Right lobe of liver (tissue), 6 donors: ENCODE measurements at regions of chr5 and their contacts with region 1.

Region 1: GRCh38 chr5:127564002-127564769 is 46.7 kb downstream of the PRRC1 start:
- DNase-seq: no peak
- ATAC-seq: peak; percentile 85 to 91 (median 87)
- H3K4me3 ChIP-seq: no peak overlapping the region
- H3K27ac ChIP-seq: no peak overlapping the region
- H3K4me1 ChIP-seq: no peaks in the 10 kb centered on the region
- H3K27me3 ChIP-seq: no peaks in the 10 kb centered on the region
- CTCF ChIP-seq: peak; percentile 65 to 73 (median 68)
- POLR2A ChIP-seq: no peak

Region 2: DNA sequence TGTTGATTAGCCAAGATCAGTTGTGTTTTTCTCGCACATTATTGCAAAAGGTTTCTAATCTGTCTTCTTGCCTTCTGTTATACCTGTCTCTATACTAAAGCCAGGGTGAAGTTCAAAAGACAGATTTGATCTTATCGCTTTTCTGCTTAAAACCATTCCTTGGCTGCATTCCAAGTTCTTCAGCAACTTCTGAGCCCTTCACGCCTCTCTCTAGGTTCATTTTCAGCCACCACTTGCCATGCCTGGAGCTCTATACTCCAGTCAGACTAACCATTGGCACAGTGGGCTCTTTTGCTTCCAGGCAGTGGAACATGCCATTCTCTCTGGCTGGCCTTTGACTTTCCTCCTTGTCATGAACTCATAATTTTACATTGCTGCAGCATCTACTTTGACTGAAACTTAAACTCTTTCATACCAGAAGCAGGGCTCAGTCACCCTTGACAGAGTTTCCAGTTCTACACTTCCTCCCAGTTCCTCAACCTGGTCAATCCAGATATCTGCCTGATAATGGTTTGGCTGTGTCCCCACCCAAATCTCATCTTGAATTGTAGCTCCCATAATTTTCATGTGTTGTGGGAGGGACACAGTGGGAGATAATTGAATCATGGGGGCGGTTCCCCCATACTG is 633.8 kb after region 1 on chr5:
- intact Hi-C with region 1: loop called in 1 of 2 experiments (anchors 10 kb)
- DNase-seq: no peak
- ATAC-seq: no peak
- H3K4me3 ChIP-seq: no peak overlapping the region
- H3K27ac ChIP-seq: no peak overlapping the region
- H3K4me1 ChIP-seq: peaks cover 0 to 10% (median 0%) of the 10 kb centered on the region in 4 donors
- H3K27me3 ChIP-seq: no peaks in the 10 kb centered on the region
- CTCF ChIP-seq: no peak
- POLR2A ChIP-seq: no peak